GM12878 (cell line): ENCODE measurements at regions of chr1 and their contacts with region 1.

Region 1: DNA sequence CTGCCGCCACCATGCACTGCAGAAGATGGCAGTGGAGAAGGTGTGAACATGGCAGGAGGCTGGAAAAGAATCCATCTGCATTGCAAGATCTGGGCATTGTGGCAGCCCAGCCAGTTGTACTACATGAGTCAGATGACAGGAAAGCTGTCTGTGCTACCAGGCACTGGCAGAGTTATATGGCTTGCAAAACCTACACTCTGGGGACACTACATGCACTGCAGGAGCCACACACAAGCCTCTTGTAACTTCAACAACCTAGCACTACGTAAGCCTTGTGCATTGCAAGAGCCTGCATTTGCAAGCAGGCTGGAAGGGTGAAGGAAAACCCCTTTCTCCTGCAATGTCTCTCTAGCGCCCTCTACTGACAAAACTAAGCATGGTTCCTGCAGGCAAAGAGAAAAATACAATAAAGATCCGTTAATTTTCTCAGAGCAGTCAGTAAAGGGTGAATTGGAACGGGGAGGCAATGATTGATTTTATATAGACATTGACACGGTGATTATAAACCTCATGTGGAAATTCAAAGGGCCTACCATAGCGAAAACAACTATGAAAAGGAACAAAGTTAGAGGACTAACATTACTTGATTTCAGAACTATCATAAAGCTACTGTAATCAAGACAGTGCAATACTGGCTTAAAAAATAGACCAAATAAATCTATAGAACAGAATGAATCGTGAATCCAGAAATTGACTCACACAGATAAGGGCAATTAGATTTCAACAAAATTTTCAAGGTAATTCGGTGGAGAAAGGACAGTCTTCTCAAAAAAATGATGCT is 26.2 kb upstream of the DYNLT5 start:
- DNase-seq: peak; percentile 26
- ATAC-seq: peak; percentile 93
- H3K4me3 ChIP-seq: no peak overlapping the region
- H3K27ac ChIP-seq: no peak overlapping the region
- H3K4me1 ChIP-seq: no peaks in the 10 kb centered on the region
- H3K27me3 ChIP-seq: peaks cover 0 to 8% of the 10 kb centered on the region in 2 experiments; a peak in 1 of 4 replicates
- CTCF ChIP-seq: peak; percentile 89 to 93 (median 90)
- EP300 ChIP-seq: no peak
- POLR2A ChIP-seq: no peak
- RAD21 ChIP-seq: peak; percentile 89

Region 2: DNA sequence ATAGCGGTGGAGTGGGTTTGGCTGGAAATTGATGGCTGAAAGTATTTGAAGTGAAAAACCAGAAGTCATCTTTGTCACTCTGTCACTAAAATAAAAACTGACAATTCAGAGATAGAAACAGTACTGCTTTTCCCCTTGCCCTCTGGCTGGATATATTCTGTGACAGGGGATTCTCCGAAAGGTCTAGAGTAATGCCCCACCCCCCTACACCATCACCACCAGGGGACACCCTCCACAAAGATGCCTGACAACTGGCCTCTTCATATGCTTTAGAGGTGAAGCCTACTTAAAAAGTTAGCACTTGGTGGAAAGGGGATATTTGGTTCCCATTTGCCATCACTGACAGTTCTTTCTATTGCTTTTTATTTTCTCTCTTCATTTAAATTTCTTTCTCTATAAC is 118.6 kb before region 1 on chr1:
- CTCF ChIA-PET with region 1: interaction called, 4 read pairs
- POLR2A ChIA-PET with region 1: no interaction called
- RAD21 ChIA-PET with region 1: no interaction called
- SMC1A ChIA-PET with region 1: no interaction called
- in situ Hi-C with region 1: no loop called
- intact Hi-C with region 1: loop called (anchors 5 kb)
- DNase-seq: no peak
- ATAC-seq: peak; percentile 56
- H3K4me3 ChIP-seq: no peak overlapping the region
- H3K27ac ChIP-seq: no peak overlapping the region
- H3K4me1 ChIP-seq: no peaks in the 10 kb centered on the region
- H3K27me3 ChIP-seq: no peaks in the 10 kb centered on the region; a peak in 1 of 4 replicates
- CTCF ChIP-seq: peak; percentile 6 to 10 (median 7); a peak in 2 of 6 replicates
- EP300 ChIP-seq: no peak
- POLR2A ChIP-seq: no peak
- RAD21 ChIP-seq: peak; percentile 32; the same call in 1 of the 2 replicates

Region 3: GRCh38 chr1:66633159-66633558 is 92.9 kb before region 1 on chr1:
- CTCF ChIA-PET with region 1: no interaction called
- POLR2A ChIA-PET with region 1: no interaction called
- RAD21 ChIA-PET with region 1: no interaction called
- SMC1A ChIA-PET with region 1: no interaction called
- in situ Hi-C with region 1: no loop called
- intact Hi-C with region 1: no loop called
- DNase-seq: no peak
- ATAC-seq: no peak
- H3K4me3 ChIP-seq: no peak overlapping the region
- H3K27ac ChIP-seq: no peak overlapping the region
- H3K4me1 ChIP-seq: no peaks in the 10 kb centered on the region
- H3K27me3 ChIP-seq: no peaks in the 10 kb centered on the region
- CTCF ChIP-seq: no peak
- EP300 ChIP-seq: no peak
- POLR2A ChIP-seq: no peak
- RAD21 ChIP-seq: no peak